ENCODE measurements at regions of chr20 and their contacts with region 1.

Region 1: GRCh38 chr20:45629496-45630100 is at the start of gene WFDC10A:
- DNase-seq: peak; percentile 50 to 55
- H3K4me3 ChIP-seq: no peak within 1 kb of the TSS
- H3K27ac ChIP-seq: no peak within 1 kb of the TSS
- H3K4me1 ChIP-seq: no peaks in the 10 kb centered on the region
- H3K27me3 ChIP-seq: peaks cover 7% of the 10 kb centered on the region; the same call in 1 of the 2 replicates
- CTCF ChIP-seq: peak; percentile 84
- total RNA-seq, gene WFDC10A: not detected in 2 replicates

Region 2: DNA sequence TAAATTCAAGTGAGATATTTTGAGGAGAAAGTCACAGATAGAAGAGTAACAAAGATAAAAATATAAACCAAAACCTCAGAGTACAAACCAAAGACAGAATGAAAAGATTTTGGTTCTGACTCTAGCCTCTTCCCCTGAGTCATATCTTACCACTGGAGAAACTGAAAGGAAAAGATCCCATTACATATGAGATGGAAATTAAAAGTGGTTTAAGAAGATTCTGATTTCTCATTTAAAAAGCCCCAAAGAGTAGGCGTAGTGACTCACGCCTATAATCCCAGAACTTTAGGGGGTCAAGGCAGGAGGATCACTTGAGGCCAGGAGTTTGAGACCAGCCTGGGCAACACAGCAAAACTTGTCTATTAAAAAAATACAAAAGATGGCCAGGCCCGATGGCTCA is 123.1 kb after region 1 on chr20:
- CTCF ChIA-PET with region 1: interaction called, 18 read pairs
- POLR2A ChIA-PET with region 1: no interaction called
- intact Hi-C with region 1: no loop called
- DNase-seq: no peak
- H3K4me3 ChIP-seq: no peak overlapping the region
- H3K27ac ChIP-seq: no peak overlapping the region
- H3K4me1 ChIP-seq: no peaks in the 10 kb centered on the region
- H3K27me3 ChIP-seq: no peaks in the 10 kb centered on the region
- CTCF ChIP-seq: no peak

Measured in PC-9 (cell line).